Posterior vena cava (tissue), 2 donors: ENCODE measurements at regions of chr1 and their contacts with region 1.

Region 1: DNA sequence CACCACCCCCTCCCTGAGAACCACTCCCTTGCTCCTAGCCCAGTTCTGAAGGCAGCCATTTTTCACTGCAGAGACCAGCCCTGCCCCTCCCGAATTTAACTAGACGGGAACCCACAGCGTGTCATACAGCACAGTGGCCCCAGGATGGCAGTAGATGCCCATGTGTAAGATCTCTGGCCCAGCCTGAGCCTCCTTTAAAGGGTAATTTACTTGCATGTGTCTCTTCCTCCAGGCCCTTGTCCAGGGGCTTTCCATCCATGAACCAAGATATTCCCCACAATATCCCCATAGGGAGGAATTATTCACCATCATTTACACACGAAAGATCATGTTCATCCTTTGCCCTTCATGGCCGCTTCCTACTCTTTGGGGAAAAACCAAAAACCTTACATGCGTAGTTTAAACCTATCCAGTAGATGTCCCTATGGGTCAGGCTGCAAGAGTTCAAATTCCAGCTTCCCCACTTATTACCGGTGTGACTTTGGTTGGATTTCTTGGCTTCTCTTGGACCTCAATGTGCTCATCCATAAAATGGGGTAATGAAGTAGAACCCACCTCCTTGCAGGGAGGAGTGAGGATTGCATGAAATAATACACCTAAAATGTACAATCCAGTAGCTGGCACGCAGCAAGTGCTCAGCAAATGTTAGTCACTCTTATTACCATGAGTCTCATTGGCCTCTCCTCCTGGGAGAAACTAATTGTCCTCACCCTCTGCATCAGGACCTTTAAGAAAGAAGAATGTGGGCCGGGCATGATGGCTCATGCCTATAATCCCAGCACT is 4.0 kb upstream of the LACTBL1 start:
- DNase-seq: peak; percentile 84

Region 2: DNA sequence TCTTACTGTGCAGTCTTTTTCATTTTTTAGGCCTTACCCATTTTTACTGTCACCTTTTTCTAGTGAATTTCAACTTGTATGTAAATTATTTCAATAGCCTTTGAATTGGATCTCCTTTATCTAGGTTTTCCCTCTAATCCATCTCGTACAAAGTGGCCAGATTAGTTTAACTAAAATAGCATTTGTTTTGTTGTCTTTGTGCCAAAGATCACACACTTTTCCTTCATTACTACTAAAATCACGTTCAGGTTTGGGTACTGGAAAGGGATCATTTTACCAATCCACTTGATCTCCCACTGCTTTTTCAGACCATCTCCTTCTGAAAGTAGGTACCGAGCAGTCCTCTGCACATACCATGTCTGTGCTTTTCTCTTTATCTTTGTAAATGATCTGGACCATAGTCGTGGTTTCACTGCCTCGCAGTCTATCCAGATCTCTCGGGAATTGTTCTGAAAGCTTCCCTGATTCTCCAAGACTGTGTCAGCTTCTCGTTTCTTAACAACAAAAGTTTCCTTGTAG is 62.7 kb after region 1 on chr1:
- intact Hi-C with region 1: no loop called
- DNase-seq: no peak

Region 3: DNA sequence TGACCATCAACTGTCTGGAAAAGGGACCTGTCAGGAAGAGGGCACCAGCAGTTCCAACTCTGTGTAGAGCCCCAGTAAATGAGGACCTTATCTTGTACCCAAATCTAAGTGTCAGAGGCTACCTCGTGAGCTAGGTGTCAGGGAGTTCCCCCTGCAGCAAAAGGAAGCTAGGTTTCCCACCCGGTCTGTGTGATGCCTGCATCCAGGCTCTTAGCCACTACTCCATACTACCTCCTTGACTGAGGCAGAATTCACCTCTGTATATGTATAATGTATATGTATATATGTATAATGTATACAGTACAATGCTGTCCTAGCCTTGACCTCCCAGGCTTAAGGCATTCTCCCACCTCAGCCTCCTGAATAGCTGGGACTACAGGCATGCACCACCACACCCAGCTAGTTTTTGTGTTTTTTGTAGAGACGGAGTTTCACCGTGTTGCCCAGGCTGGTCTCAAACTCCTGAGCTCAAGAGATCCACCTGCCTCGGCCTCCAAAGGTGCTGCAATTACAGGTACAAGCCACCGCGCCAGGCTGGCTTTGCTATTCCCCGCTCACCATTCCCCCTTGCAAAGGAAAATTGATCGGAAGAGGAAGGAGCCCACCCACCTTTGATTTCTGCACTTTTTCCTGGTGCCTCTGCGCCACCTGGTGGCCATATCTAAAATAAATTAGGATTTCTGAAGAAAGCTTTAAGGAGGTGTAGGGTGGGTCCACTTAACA is 207.7 kb after region 1 on chr1:
- intact Hi-C with region 1: loop called (anchors 10 kb)
- DNase-seq: no peak

Region 4: DNA sequence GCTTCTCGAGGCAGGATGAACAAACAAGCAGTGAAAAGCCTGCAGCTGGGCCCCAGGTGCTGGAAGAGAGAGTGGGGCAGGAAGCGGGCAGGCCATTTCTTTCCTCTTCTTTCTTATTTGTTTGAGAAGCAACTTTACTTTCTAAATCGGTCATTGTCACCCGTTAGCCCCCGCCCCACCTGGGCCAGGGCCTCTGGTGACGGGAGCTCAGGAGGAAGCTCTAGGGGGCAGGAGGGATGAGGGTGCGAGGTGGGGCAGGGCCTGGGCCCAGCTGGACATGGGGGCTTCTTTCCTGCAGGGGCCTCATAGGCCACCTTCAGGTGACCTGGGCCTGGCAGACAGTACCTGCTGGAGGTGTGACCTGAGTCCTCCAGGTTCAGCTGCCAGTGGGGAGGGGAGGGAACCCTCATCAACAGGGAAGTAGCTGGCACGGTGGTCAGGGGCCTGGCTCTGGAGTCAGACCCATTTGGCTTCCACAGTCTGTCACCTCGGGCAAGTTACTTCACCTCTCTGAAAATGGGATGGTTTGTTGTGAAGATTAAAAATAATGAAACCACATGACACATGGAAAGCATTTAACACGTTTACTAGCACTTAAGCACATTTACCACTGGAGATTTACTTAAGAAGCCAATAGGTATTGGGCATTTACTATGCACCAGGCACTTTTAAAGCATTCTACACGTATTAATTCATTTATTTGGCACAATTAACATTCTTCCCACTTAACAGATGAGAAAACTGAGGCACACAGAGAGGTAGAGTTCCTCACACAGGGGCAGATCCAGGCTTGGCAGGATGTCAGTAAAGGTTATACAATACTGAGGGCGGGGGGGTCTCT is 636.8 kb after region 1 on chr1:
- intact Hi-C with region 1: no loop called
- DNase-seq: no peak